ENCODE measurements at regions of chr10 and their contacts with region 1.

Region 1: GRCh38 chr10:110820321-110820814 is 51.4 kb upstream of the PDCD4 start:
- DNase-seq: peak in 1 of 2 donors; percentile 90
- H3K4me3 ChIP-seq: peak overlapping the region in 1 of 2 donors; percentile 12
- H3K27ac ChIP-seq: peak overlapping the region; percentile 86 to 91
- H3K4me1 ChIP-seq: peaks cover 33 to 58% of the 10 kb centered on the region in 2 donors
- H3K27me3 ChIP-seq: no peaks in the 10 kb centered on the region
- CTCF ChIP-seq: no peak

Region 2: GRCh38 chr10:110774069-110775019 is 46.0 kb before region 1 on chr10:
- intact Hi-C with region 1: no loop called
- DNase-seq: no peak
- H3K4me3 ChIP-seq: no peak overlapping the region
- H3K27ac ChIP-seq: no peak overlapping the region
- H3K4me1 ChIP-seq: no peaks in the 10 kb centered on the region
- H3K27me3 ChIP-seq: no peaks in the 10 kb centered on the region
- CTCF ChIP-seq: no peak

Region 3: DNA sequence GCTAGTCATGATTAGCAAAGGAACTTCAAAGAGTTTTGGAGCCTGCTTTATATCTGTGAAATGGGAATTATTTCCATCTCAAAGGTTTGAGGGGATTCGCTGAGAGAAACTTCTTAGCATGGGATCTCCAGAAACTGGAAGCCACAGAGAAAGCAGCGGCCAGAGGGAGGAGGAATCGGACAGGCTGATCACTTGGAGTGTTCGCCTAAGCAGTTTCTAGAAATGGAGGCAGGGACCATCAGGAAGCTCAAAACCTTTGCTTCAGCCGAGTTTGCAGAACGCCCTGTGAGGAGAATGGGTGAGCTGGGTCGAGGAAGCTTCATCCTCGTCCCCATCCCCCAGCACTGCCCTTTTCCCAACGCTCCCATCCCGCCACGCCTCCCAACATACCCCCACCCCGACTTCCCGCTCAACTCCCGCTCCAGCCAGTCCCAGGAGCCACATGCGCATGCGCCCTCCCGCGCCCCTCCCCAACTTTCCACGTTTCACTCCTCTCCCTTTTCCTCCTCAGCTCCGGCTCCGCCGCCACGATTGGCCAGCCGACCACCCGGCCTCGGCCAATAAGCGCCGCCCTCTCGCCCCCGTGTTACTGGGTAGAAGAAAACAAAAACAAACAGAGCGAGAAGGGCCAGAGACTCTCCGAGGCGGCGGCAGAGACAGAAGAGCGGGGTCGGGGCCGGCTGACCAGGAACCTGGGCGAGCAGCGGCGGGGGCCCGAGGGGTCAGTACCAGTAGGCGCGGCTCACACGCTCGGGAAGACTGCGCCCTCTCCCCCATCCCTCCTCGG is 51.1 kb after region 1 on chr10 and contains the start of gene PDCD4:
- intact Hi-C with region 1: loop called (anchors 2 kb)
- DNase-seq: peak; percentile 99 to 100
- H3K4me3 ChIP-seq: peak within 1 kb of the TSS; percentile 87 to 88
- H3K27ac ChIP-seq: peak within 1 kb of the TSS; percentile 97 to 99
- H3K4me1 ChIP-seq: peaks cover 16 to 35% of the 10 kb centered on the region in 2 donors
- H3K27me3 ChIP-seq: no peaks in the 10 kb centered on the region
- CTCF ChIP-seq: no peak
- total RNA-seq, gene PDCD4: 10.3 TPM